ENCODE measurements at regions of chr1 and their contacts with region 1.

Region 1: GRCh38 chr1:64966158-64966971 is at the start of gene JAK1:
- DNase-seq: peak; percentile 76
- H3K4me3 ChIP-seq: peak within 1 kb of the TSS; percentile 79 to 94 (median 85)
- H3K27ac ChIP-seq: peak within 1 kb of the TSS; percentile 92
- H3K4me1 ChIP-seq: peaks cover 34% of the 10 kb centered on the region
- H3K27me3 ChIP-seq: no peaks in the 10 kb centered on the region
- CTCF ChIP-seq: no peak
- POLR2A ChIP-seq: peak; percentile 97
- total RNA-seq, gene JAK1: 152 and 177 TPM in 2 replicates

Region 2: GRCh38 chr1:64686828-64687724 is 279.3 kb before region 1 on chr1:
- CTCF ChIA-PET with region 1: no interaction called
- POLR2A ChIA-PET with region 1: interaction called, 3 read pairs
- dilution Hi-C with region 1: no loop called
- intact Hi-C with region 1: loop called (anchors 5 kb)
- DNase-seq: peak; percentile 88
- H3K4me3 ChIP-seq: peak overlapping the region in 1 of 3 experiments; percentile 22
- H3K27ac ChIP-seq: peak overlapping the region; percentile 95
- H3K4me1 ChIP-seq: peaks cover 31% of the 10 kb centered on the region
- H3K27me3 ChIP-seq: no peaks in the 10 kb centered on the region
- CTCF ChIP-seq: peak; percentile 67 to 73
- POLR2A ChIP-seq: no peak

Region 3: GRCh38 chr1:64834734-64835133 is 131.6 kb before region 1 on chr1:
- CTCF ChIA-PET with region 1: no interaction called
- POLR2A ChIA-PET with region 1: interaction called, 4 read pairs
- dilution Hi-C with region 1: no loop called
- intact Hi-C with region 1: loop called (anchors 2 kb)
- DNase-seq: no peak
- H3K4me3 ChIP-seq: no peak overlapping the region
- H3K27ac ChIP-seq: peak overlapping the region; percentile 4
- H3K4me1 ChIP-seq: peaks cover 48% of the 10 kb centered on the region
- H3K27me3 ChIP-seq: no peaks in the 10 kb centered on the region
- CTCF ChIP-seq: no peak
- POLR2A ChIP-seq: no peak

Region 4: GRCh38 chr1:64877151-64877550 is 89.2 kb before region 1 on chr1:
- CTCF ChIA-PET with region 1: interaction called, 3 read pairs
- POLR2A ChIA-PET with region 1: no interaction called
- dilution Hi-C with region 1: no loop called
- intact Hi-C with region 1: loop called (anchors 1 kb)
- DNase-seq: no peak
- H3K4me3 ChIP-seq: no peak overlapping the region
- H3K27ac ChIP-seq: peak overlapping the region; percentile 98
- H3K4me1 ChIP-seq: peaks cover 55% of the 10 kb centered on the region
- H3K27me3 ChIP-seq: no peaks in the 10 kb centered on the region
- CTCF ChIP-seq: no peak
- POLR2A ChIP-seq: no peak

Region 5: DNA sequence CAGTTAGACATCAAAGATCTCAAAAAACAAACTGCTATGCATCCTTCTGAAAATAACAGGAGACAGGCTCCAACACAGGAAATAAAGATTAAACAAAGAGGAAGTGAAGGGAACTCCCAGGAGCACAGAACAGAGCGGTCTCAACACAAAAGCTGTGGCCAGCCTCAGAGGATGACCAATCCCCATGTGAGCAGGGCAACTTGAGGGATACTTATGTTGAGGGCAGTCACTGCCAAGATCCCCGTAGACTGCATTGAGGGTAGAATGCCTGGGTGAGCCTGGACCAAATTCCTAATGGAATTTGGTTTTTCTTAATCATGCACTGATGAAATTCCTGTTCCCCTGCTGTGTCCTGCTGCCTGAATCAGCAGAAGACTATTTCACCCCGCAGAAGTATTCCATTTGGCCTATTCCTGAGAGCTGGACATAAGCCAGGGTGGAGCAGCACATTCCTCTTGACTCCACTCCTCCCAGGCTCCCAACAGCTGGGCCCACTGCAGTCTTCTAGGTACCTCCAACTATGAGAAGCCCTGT is 49.0 kb before region 1 on chr1:
- CTCF ChIA-PET with region 1: no interaction called
- POLR2A ChIA-PET with region 1: no interaction called
- dilution Hi-C with region 1: no loop called
- intact Hi-C with region 1: loop called (anchors 1 kb)
- DNase-seq: peak; percentile 91
- H3K4me3 ChIP-seq: peak overlapping the region in 1 of 3 experiments; percentile 6
- H3K27ac ChIP-seq: peak overlapping the region; percentile 86
- H3K4me1 ChIP-seq: peaks cover 54% of the 10 kb centered on the region
- H3K27me3 ChIP-seq: no peaks in the 10 kb centered on the region
- CTCF ChIP-seq: no peak
- POLR2A ChIP-seq: no peak

Region 6: DNA sequence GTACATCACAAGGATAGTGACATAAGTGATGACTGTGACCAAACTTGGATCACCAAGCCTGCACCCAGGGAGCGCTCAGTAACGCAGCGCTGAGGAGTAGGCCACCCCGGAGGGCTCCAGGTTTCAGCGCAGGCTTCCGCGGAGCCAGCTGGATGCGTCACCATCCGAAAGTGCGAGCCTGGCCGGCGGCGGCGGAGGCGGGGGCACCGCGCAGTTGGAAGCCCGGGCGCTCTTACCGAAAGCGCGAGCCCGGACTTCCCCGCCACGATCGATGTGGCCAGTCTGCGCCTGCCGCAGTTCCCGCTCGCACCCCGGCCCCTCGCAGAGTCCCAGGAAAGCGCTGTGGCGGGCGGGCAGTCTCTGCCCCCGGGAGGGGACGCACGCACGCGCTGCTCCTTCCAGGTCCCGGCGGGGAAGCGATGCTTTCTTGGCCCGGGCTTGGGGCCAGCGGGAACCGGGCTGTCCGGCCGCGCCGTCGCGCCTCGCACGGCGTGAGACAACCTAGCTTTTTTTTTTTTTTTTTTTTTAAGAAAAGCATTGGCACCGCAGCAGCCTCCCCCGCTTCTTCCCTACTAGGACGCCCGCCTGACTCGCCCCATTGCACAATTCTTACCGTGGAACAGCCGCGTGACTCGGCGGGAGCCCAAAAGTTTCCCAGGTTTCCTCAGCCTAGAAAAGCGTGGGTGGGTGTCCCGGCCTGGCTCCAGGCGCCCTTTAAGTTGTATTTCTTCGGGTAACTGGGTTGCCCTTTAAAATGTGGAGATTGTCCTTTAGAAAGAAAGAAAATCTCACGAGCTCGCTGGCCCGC is 36.3 kb after region 1 on chr1:
- CTCF ChIA-PET with region 1: no interaction called
- POLR2A ChIA-PET with region 1: interaction called, 3 read pairs
- dilution Hi-C with region 1: no loop called
- intact Hi-C with region 1: loop called (anchors 2 kb)
- DNase-seq: peak; percentile 82
- H3K4me3 ChIP-seq: peak overlapping the region; percentile 13 to 55 (median 46)
- H3K27ac ChIP-seq: peak overlapping the region; percentile 69
- H3K4me1 ChIP-seq: peaks cover 15% of the 10 kb centered on the region
- H3K27me3 ChIP-seq: no peaks in the 10 kb centered on the region
- CTCF ChIP-seq: no peak
- POLR2A ChIP-seq: peak; percentile 40